ENCODE measurements at regions of chr14 and their contacts with region 1.

Region 1: GRCh38 chr14:31937721-31938346 is 139.3 kb upstream of the ARHGAP5 start:
- DNase-seq: no peak
- ATAC-seq: peak; percentile 71
- H3K4me3 ChIP-seq: no peak overlapping the region
- H3K27ac ChIP-seq: no peak overlapping the region
- H3K4me1 ChIP-seq: peaks cover 4% of the 10 kb centered on the region
- H3K27me3 ChIP-seq: no peaks in the 10 kb centered on the region
- CTCF ChIP-seq: no peak

Region 2: GRCh38 chr14:32252030-32252670 is 314.3 kb after region 1 on chr14:
- intact Hi-C with region 1: loop called (anchors 10 kb)
- DNase-seq: no peak
- ATAC-seq: peak; percentile 95
- H3K4me3 ChIP-seq: no peak overlapping the region
- H3K27ac ChIP-seq: no peak overlapping the region
- H3K4me1 ChIP-seq: peaks cover 3% of the 10 kb centered on the region
- H3K27me3 ChIP-seq: no peaks in the 10 kb centered on the region
- CTCF ChIP-seq: peak; percentile 82